Gastrocnemius medialis (tissue), 4 donors: ENCODE measurements at regions of chr16 and their contacts with region 1.

Region 1: DNA sequence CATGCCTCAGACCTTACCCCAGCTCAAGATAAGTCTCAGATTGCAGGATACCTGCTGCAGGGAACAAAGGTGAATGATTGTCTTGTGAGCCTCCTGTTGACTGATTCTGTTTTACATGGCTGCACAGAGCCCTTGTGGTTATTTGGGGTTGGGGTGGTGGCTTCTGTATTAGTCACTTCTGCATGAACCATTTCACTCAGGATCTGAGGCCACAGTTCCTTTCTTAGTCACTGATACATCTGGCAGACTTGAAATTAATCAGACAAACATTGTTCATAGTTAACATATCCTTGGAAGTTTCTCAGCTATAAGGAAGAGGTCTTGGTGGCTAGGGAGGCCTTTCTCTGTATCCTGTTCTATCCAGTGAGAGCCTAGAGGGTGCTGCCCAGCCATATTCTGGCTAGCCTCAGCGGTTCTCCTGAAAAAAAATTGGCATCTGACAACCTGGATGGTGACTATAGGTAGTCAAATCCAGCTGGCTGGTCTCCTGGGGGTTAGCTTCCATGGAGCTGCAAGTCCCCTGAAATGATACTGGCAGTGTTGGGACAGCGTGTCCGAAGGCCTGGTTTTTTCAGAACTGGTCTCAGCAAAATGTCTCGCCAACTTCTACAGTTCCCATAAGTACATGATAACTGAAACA is 8.4 kb upstream of the PLK1 start:
- DNase-seq: peak; percentile 47 to 86
- ATAC-seq: peak; percentile 94 to 99
- H3K4me3 ChIP-seq: no peak overlapping the region
- H3K27ac ChIP-seq: peak overlapping the region; percentile 50 to 81 (median 72)
- H3K4me1 ChIP-seq: peaks cover 16 to 33% of the 10 kb centered on the region in 2 donors
- H3K27me3 ChIP-seq: no peaks in the 10 kb centered on the region
- CTCF ChIP-seq: no peak
- POLR2A ChIP-seq: no peak

Region 2: GRCh38 chr16:24504472-24505345 is 834.5 kb after region 1 on chr16:
- in situ Hi-C with region 1: loop called in 1 of 4 experiments (anchors 25 kb)
- intact Hi-C with region 1: no loop called
- DNase-seq: peak in 1 of 2 donors; percentile 8
- ATAC-seq: peak; percentile 56 to 65
- H3K4me3 ChIP-seq: no peak overlapping the region
- H3K27ac ChIP-seq: no peak overlapping the region
- H3K4me1 ChIP-seq: peaks cover 3 to 7% of the 10 kb centered on the region in 2 donors
- H3K27me3 ChIP-seq: no peaks in the 10 kb centered on the region
- CTCF ChIP-seq: peak; percentile 33 to 72 (median 59)
- POLR2A ChIP-seq: no peak